GM12878 (cell line): ENCODE measurements at regions of chr17 and their contacts with region 1.

Region 1: GRCh38 chr17:27519550-27519949 is 63.3 kb downstream of the KSR1 start:
- DNase-seq: peak; percentile 51
- ATAC-seq: peak; percentile 83
- H3K4me3 ChIP-seq: no peak overlapping the region
- H3K27ac ChIP-seq: peak overlapping the region; percentile 75
- H3K4me1 ChIP-seq: peaks cover 36% of the 10 kb centered on the region
- H3K27me3 ChIP-seq: no peaks in the 10 kb centered on the region
- CTCF ChIP-seq: no peak
- EP300 ChIP-seq: no peak
- POLR2A ChIP-seq: no peak
- RAD21 ChIP-seq: 0 out of 2 replicates have a peak, but pooled peaks have one; percentile 6

Region 2: DNA sequence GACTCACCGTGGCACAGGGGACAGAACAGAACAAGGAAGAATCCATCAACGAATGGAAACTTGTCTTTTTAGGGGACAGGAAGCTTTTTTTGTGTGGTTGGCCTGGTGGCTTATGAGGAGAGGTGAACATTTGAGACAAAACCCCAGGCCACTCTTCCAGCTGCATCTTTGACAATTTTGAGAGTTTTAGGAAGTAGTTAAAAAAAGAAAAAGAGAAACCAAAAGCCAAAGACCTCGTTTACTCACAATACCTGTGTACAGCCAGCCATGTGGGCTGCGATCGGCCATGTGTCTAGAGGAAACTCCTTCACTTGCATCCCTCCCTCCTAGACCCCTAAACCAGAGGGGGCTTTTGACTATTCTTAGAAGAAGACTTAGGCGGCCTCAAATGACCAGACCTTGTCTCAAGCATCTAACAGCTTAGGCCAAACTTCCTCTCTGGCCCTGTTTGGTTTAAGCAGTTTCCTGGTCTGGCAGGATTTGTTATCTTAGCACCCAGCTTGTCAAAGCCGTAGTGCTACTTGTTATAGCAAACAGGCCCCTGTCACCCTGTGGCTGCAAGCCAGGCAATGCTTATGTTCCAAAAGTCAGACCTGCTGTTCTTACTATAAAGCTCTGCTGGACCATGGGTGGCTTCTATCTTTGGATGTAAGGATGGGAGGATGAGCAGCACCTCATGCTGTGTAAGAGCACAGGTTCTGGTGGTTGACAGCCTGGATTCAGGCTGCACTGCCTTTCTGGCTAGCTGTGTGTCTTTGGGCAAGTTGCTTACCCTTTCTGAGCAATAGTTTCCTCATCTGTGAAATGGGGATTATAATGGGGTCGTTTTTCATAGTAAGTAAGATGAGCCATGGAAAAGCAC is 45.6 kb before region 1 on chr17:
- CTCF ChIA-PET with region 1: interaction called, 6 read pairs
- POLR2A ChIA-PET with region 1: interaction called, 6 read pairs
- RAD21 ChIA-PET with region 1: interaction called, 37 read pairs
- SMC1A ChIA-PET with region 1: interaction called, 8 read pairs
- in situ Hi-C with region 1: no loop called
- intact Hi-C with region 1: loop called (anchors 2 kb)
- DNase-seq: peak; percentile 97
- ATAC-seq: peak; percentile 35
- H3K4me3 ChIP-seq: peak overlapping the region; percentile 42
- H3K27ac ChIP-seq: peak overlapping the region; percentile 98
- H3K4me1 ChIP-seq: peaks cover 85% of the 10 kb centered on the region
- H3K27me3 ChIP-seq: no peaks in the 10 kb centered on the region
- CTCF ChIP-seq: no peak
- EP300 ChIP-seq: peak; percentile 68 to 81; a peak in 2 of 4 replicates
- POLR2A ChIP-seq: no peak
- RAD21 ChIP-seq: peak; percentile 17; the same call in 1 of the 2 replicates

Region 3: DNA sequence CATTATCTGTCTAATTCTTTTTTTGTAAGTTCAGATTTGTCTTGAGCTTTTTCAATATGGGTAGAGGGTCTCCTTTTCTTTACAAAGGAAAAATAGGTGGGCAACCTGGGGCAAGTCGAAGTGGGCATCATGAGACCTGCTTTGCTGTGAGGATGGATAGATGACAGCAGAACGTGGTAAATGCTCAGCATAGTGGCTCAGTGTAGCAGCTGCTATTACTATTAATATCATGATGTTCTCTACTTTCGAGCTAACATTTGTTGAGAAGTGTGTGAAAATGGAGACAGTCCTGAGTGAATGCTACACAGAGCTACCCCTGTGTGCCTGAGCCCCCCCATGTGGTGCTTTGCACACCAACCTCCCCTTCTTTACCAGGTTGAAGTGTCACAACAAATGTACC is 72.4 kb after region 1 on chr17:
- CTCF ChIA-PET with region 1: no interaction called
- POLR2A ChIA-PET with region 1: no interaction called
- RAD21 ChIA-PET with region 1: no interaction called
- SMC1A ChIA-PET with region 1: no interaction called
- in situ Hi-C with region 1: no loop called
- intact Hi-C with region 1: no loop called
- DNase-seq: no peak
- ATAC-seq: no peak
- H3K4me3 ChIP-seq: no peak overlapping the region
- H3K27ac ChIP-seq: no peak overlapping the region
- H3K4me1 ChIP-seq: no peaks in the 10 kb centered on the region
- H3K27me3 ChIP-seq: no peaks in the 10 kb centered on the region
- CTCF ChIP-seq: no peak
- EP300 ChIP-seq: no peak
- POLR2A ChIP-seq: no peak
- RAD21 ChIP-seq: no peak